ENCODE measurements at regions of chr2 and their contacts with region 1.

Region 1: GRCh38 chr2:119476301-119477021 is 44.8 kb downstream of the TMEM37 start:
- DNase-seq: peak; percentile 37
- ATAC-seq: peak; percentile 78
- H3K4me3 Mint-ChIP-seq: no peak overlapping the region
- H3K27ac Mint-ChIP-seq: no peak overlapping the region
- H3K4me1 Mint-ChIP-seq: no peaks in the 10 kb centered on the region
- H3K27me3 Mint-ChIP-seq: peaks cover 5% of the 10 kb centered on the region
- CTCF ChIP-seq: peak; percentile 49

Region 2: DNA sequence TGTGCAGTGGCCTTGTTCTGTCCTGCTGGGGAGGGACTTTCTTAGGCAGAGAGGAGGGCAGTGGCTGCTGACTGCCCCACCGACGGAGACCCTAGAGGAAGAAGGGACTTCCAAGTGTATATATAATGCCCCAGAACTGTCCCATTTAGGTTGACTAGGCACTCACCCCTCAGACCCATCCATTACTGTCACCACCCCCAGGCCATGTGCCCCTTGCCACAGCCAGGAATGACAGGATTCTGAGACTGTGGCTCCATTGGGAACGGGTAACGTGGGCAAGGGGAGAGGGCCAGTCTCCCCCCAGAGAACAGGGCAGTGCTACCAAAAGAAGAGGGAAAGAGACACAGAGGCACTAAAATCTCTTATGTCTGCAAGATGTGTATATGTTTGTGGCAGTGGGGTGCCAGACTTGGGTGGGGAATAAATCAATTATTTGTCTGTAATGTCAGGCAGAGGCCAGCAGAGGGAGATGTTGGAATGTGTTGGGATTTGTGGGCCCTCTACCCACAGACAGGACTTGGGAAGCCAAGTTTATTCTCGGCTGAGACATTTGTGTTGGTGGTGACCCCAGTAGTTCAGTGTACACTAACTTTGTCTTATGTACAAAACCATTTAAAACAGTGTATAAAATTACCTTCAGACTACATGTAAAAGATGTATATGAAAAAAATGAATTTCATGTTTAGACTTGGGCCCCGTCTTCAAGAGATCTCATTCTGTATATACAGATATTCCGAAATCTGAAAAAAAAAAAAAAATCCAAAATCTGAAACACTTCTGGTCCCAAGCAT is 68.8 kb before region 1 on chr2:
- CTCF ChIA-PET with region 1: interaction called, 102 read pairs
- POLR2A ChIA-PET with region 1: interaction called, 8 read pairs
- intact Hi-C with region 1: loop called (anchors 1 kb)
- DNase-seq: no peak
- ATAC-seq: peak; percentile 47
- H3K4me3 Mint-ChIP-seq: no peak overlapping the region
- H3K27ac Mint-ChIP-seq: no peak overlapping the region
- H3K4me1 Mint-ChIP-seq: no peaks in the 10 kb centered on the region
- H3K27me3 Mint-ChIP-seq: peaks cover 13% of the 10 kb centered on the region
- CTCF ChIP-seq: peak; percentile 68

Measured in activated B cell treated with CpG ODN at 0.5 μM for 24 hours (primary cell).